Dorsolateral prefrontal cortex (tissue), 120 donors: ENCODE measurements at regions of chr22 and their contacts with region 1.

Region 1: GRCh38 chr22:46309526-46310085 is 12.9 kb downstream of the GTSE1 start:
- DNase-seq: no peak
- H3K4me3 ChIP-seq: no peak overlapping the region
- H3K27ac ChIP-seq: no peak overlapping the region
- H3K27me3 ChIP-seq: no peaks in the 10 kb centered on the region
- CTCF ChIP-seq: no peak

Region 2: DNA sequence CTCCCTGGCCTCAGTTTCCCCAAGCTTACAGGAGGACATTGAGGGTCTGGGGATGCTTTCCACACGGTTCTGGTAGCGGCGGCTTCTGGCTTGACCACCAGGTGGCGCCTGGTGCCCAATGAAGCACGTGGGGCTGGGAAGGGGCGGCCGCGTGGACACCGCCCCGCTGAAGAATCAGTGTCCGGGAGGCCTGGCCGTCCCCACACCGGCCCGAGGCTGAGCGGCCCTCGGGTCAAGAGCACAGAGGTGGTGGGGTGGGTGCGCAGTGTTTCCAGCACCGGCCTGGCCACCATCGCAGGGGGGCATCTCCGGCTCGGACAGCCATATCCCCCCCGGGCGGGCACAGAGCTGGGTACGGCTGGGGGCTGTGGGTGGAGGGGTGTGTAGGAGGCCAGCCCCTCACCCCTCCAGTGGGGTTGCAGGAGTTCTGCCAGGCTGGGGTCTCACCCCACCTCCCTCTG is 187.1 kb before region 1 on chr22:
- intact Hi-C with region 1: loop called (anchors 1 to 5 kb)
- DNase-seq: peak; percentile 61 to 80 (median 70)
- H3K4me3 ChIP-seq: peak overlapping the region in 23 of 59 donors; percentile 6 to 53 (median 28)
- H3K27ac ChIP-seq: no peak overlapping the region
- H3K27me3 ChIP-seq: no peaks in the 10 kb centered on the region
- CTCF ChIP-seq: peak; percentile 87 to 99 (median 97)